Right ventricle myocardium superior (tissue), 1 donor: ENCODE measurements at regions of chr17 and their contacts with region 1.

Region 1: GRCh38 chr17:79393358-79394202 is 217.3 kb downstream of the RBFOX3 start:
- DNase-seq: peak; percentile 90
- ATAC-seq: peak; percentile 90

Region 2: GRCh38 chr17:79087428-79088143 is 306.0 kb before region 1 on chr17:
- intact Hi-C with region 1: loop called (anchors 5 kb)
- DNase-seq: peak; percentile 78
- ATAC-seq: peak; percentile 77

Region 3: DNA sequence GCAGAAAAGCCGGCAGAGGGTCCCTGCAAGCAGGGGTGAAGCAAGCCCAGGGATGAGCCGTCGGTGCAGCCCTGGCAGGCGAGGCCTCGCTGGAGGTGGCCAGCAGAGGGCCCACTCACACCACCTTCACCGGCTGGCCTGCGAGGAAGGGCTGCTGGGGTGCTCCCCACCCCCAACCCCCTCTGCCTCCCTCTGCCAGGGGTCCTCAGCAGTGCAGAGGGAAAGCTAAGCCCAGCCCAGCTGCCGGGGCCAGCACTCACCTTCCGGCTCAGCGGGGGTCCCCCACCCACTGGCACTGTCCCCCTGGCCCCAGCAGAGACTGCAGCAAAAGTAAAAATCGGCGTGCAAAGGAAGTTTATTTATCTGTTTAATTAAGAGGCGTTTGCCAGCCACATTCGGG is 205.5 kb before region 1 on chr17:
- intact Hi-C with region 1: loop called (anchors 5 kb)
- DNase-seq: no peak
- ATAC-seq: peak; percentile 46

Region 4: DNA sequence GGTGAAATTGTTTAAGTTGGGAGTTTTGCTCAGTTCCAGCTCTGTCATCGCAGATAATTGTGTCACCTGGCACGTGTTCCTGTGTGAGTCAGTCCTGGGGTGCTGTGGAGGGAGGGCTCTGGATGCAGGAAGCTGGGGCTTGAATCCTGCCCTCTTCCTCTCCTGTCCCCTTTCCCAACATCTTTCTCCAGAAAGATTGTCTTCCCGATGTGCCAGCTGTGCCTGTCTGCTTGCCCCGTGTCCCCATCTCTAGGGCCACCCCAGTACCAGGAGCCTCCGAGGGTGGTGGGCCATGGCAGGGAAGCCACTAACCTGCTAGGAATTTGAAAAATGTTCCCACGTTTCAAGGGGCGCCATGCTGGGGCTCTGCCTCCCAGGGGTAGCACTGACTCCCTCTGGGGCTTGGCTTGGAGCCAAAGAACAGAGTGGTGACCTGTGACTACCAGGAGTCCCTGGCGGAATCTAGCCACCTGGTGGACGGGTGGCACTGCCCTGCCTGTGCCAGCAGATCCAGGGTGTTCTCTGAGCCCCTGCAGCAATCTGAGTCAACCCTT is 120.8 kb before region 1 on chr17:
- intact Hi-C with region 1: no loop called
- DNase-seq: no peak
- ATAC-seq: no peak

Region 5: GRCh38 chr17:79478051-79478461 is 84.5 kb after region 1 on chr17:
- intact Hi-C with region 1: no loop called
- DNase-seq: no peak
- ATAC-seq: no peak